ENCODE measurements at regions of chr16 and their contacts with region 1.

Region 1: DNA sequence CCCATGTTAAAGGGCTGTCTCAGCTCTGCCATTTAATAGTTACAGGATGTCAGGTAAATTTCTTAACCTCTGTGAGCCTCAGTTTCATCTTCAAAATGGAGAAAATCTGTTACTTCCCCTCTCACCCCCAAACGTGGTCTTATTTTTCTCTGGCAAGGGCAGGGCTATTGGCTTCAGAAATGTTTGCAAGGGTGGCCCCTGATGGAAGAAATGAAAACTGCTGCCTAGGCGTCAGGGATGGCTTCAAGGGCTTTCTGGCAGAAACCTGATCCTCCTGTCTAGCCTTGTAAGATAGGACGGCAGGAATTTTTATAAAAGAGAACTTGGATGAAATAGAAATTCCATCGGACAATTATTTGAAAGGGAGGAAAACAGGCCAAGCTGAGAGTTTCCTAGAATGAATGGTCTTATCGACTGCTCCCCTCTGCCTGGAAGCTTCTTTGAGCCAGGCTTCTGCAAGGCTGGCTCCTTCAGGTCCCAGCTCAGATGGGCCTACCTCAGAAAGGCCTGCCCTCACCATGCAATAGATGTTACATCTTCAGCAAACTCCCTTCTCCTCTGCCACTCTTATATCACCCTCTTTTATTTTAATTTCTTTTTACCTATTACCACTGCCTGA is 43.0 kb upstream of the TANGO6 start:
- DNase-seq: peak; percentile 85
- ATAC-seq: peak; percentile 92
- H3K4me3 ChIP-seq: no peak overlapping the region
- H3K27ac ChIP-seq: no peak overlapping the region
- H3K4me1 ChIP-seq: peaks cover 22% of the 10 kb centered on the region
- H3K27me3 ChIP-seq: no peaks in the 10 kb centered on the region
- CTCF ChIP-seq: peak; percentile 77

Region 2: DNA sequence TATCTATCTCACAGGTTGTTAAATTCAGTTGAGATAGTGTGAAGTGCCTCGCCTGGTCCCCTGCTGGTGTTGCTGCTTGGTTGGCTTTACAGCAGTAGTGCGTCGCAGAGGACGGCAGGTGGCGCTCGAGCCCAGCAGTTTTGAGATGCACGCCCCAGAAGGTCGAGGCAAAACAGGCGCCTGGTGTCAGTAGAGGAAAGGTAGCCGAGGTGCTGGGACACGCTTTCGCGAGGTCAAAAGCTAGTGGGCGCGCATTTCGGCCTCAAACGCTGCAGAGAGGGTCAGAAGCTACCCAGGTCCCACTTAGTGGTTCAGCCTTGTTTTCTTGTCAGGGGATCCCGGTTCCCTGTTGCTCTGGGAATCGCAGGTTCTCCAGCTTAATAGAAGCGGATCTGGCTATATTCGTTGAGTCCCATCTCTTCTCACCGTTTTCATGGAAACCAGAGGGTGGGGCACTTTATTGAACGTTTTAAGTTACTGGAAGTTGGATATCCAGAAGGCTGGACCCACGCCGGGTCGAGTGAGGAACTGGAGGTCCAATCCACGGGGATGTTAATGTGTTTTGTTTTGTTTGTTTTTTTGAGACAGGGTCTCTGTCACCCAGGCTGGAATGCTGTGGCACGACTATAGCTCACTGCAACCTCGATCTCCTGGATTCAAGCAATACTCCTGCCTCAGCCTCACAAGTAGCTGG is 271.5 kb before region 1 on chr16:
- CTCF ChIA-PET with region 1: no interaction called
- POLR2A ChIA-PET with region 1: no interaction called
- intact Hi-C with region 1: loop called (anchors 10 kb)
- DNase-seq: peak; percentile 69
- ATAC-seq: peak; percentile 71
- H3K4me3 ChIP-seq: peak overlapping the region; percentile 85
- H3K27ac ChIP-seq: no peak overlapping the region
- H3K4me1 ChIP-seq: peaks cover 12% of the 10 kb centered on the region
- H3K27me3 ChIP-seq: no peaks in the 10 kb centered on the region
- CTCF ChIP-seq: peak; percentile 78

Region 3: DNA sequence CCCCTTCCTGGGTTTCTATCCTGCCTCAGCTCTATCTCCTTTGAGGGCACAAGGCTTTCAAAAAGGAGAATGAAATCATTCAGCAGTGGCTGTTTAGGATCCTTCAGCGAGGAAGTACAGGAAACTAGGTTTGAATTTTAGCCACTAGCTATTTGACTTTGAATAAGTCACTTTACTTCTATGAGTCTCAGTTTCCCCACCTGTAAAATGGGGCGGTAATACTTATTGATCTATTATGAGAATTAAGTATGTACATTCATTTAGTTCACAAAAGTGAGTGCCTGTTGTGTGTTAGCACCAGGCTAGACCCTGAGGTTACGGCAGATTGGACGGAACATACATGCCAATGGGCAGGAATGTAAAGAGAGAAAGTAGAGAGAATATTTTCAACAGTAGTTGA is 56.7 kb before region 1 on chr16:
- CTCF ChIA-PET with region 1: no interaction called
- POLR2A ChIA-PET with region 1: interaction called, 3 read pairs
- intact Hi-C with region 1: loop called (anchors 2 kb)
- DNase-seq: no peak
- ATAC-seq: no peak
- H3K4me3 ChIP-seq: peak overlapping the region; percentile 57
- H3K27ac ChIP-seq: peak overlapping the region; percentile 98
- H3K4me1 ChIP-seq: peaks cover 72% of the 10 kb centered on the region
- H3K27me3 ChIP-seq: no peaks in the 10 kb centered on the region
- CTCF ChIP-seq: no peak

Region 4: GRCh38 chr16:68814516-68814915 is 14.2 kb after region 1 on chr16:
- CTCF ChIA-PET with region 1: no interaction called
- POLR2A ChIA-PET with region 1: no interaction called
- intact Hi-C with region 1: no loop called
- DNase-seq: no peak
- ATAC-seq: no peak
- H3K4me3 ChIP-seq: no peak overlapping the region
- H3K27ac ChIP-seq: no peak overlapping the region
- H3K4me1 ChIP-seq: no peaks in the 10 kb centered on the region
- H3K27me3 ChIP-seq: no peaks in the 10 kb centered on the region
- CTCF ChIP-seq: no peak

Region 5: GRCh38 chr16:68825423-68825822 is 25.1 kb after region 1 on chr16:
- CTCF ChIA-PET with region 1: no interaction called
- POLR2A ChIA-PET with region 1: no interaction called
- intact Hi-C with region 1: no loop called
- DNase-seq: no peak
- ATAC-seq: no peak
- H3K4me3 ChIP-seq: no peak overlapping the region
- H3K27ac ChIP-seq: no peak overlapping the region
- H3K4me1 ChIP-seq: no peaks in the 10 kb centered on the region
- H3K27me3 ChIP-seq: no peaks in the 10 kb centered on the region
- CTCF ChIP-seq: no peak

Measured in PC-3 (cell line).